HEK293T (cell line): ENCODE measurements at regions of chr1 and their contacts with region 1.

Region 1: GRCh38 chr1:145963995-145964901 is at the starts of genes ANKRD34A and POLR3GL:
- DNase-seq: peak; percentile 90

Region 2: GRCh38 chr1:145918144-145918992 is 45.9 kb before region 1 on chr1 and contains the start of gene PEX11B:
- CTCF ChIA-PET with region 1: no interaction called
- POLR2A ChIA-PET with region 1: interaction called, 19 read pairs
- DNase-seq: peak; percentile 89

Region 3: GRCh38 chr1:145936247-145936646 is 28.0 kb before region 1 on chr1:
- CTCF ChIA-PET with region 1: no interaction called
- POLR2A ChIA-PET with region 1: interaction called, 10 read pairs
- DNase-seq: no peak

Region 4: GRCh38 chr1:145996433-145997015 is 32.3 kb after region 1 on chr1 and contains the start of gene TXNIP:
- CTCF ChIA-PET with region 1: no interaction called
- POLR2A ChIA-PET with region 1: interaction called, 17 read pairs
- DNase-seq: peak; percentile 99